ENCODE measurements at regions of chr10 and their contacts with region 1.

Region 1: GRCh38 chr10:24724381-24725228 is 918 bp upstream of the ARHGAP21 start:
- DNase-seq: peak; percentile 90
- ATAC-seq: peak; percentile 87
- H3K4me3 ChIP-seq: peak overlapping the region; percentile 88
- H3K27ac ChIP-seq: peak overlapping the region; percentile 51
- H3K4me1 ChIP-seq: peaks cover 6% of the 10 kb centered on the region; the same call in 1 of the 2 replicates
- H3K27me3 ChIP-seq: no peaks in the 10 kb centered on the region
- CTCF ChIP-seq: no peak
- EP300 ChIP-seq: no peak
- POLR2A ChIP-seq: peak; percentile 89
- RAD21 ChIP-seq: peak; percentile 4; the same call in 1 of the 2 replicates

Region 2: DNA sequence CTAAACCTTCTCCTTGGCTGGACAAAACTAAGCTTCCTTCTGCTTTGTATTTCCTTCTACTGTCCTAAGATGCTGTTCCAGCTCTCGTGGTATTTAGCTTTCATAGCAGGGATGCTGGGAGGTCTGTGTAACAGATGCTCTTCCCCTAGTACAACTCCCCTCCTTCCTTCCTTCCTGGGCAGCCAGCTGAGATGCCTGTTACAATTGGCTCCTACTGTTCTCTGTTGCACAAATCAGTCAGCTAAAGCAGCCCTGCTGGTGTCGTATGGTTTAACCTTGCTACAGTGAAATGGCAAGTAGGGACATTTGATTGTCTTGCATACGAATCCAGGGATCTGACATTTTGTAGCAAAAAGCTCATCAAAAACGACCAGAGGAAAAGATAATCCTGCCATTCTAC is 144.7 kb before region 1 on chr10:
- CTCF ChIA-PET with region 1: no interaction called
- POLR2A ChIA-PET with region 1: no interaction called
- RAD21 ChIA-PET with region 1: no interaction called
- SMC1A ChIA-PET with region 1: no interaction called
- in situ Hi-C with region 1: no loop called
- intact Hi-C with region 1: no loop called
- DNase-seq: no peak
- ATAC-seq: no peak
- H3K4me3 ChIP-seq: no peak overlapping the region
- H3K27ac ChIP-seq: no peak overlapping the region
- H3K4me1 ChIP-seq: no peaks in the 10 kb centered on the region
- H3K27me3 ChIP-seq: no peaks in the 10 kb centered on the region
- CTCF ChIP-seq: no peak
- EP300 ChIP-seq: no peak
- POLR2A ChIP-seq: no peak
- RAD21 ChIP-seq: no peak

Region 3: GRCh38 chr10:24652381-24652957 is 72.1 kb before region 1 on chr10:
- CTCF ChIA-PET with region 1: interaction called, 4 read pairs
- POLR2A ChIA-PET with region 1: interaction called, 28 read pairs
- RAD21 ChIA-PET with region 1: interaction called, 9 read pairs
- SMC1A ChIA-PET with region 1: interaction called, 5 read pairs
- in situ Hi-C with region 1: no loop called
- intact Hi-C with region 1: loop called (anchors 2 kb)
- DNase-seq: peak; percentile 62
- ATAC-seq: peak; percentile 93
- H3K4me3 ChIP-seq: peak overlapping the region; percentile 46
- H3K27ac ChIP-seq: peak overlapping the region; percentile 76
- H3K4me1 ChIP-seq: peaks cover 15% of the 10 kb centered on the region
- H3K27me3 ChIP-seq: no peaks in the 10 kb centered on the region
- CTCF ChIP-seq: no peak
- EP300 ChIP-seq: peak; percentile 42 to 82; a peak in 3 of 4 replicates
- POLR2A ChIP-seq: no peak
- RAD21 ChIP-seq: no peak

Region 4: GRCh38 chr10:24664991-24665390 is 59.6 kb before region 1 on chr10:
- CTCF ChIA-PET with region 1: no interaction called
- POLR2A ChIA-PET with region 1: no interaction called
- RAD21 ChIA-PET with region 1: no interaction called
- SMC1A ChIA-PET with region 1: no interaction called
- in situ Hi-C with region 1: no loop called
- intact Hi-C with region 1: no loop called
- DNase-seq: no peak
- ATAC-seq: no peak
- H3K4me3 ChIP-seq: no peak overlapping the region
- H3K27ac ChIP-seq: no peak overlapping the region
- H3K4me1 ChIP-seq: no peaks in the 10 kb centered on the region
- H3K27me3 ChIP-seq: no peaks in the 10 kb centered on the region
- CTCF ChIP-seq: no peak
- EP300 ChIP-seq: no peak
- POLR2A ChIP-seq: no peak
- RAD21 ChIP-seq: no peak

Region 5: GRCh38 chr10:24882047-24882698 is 157.6 kb after region 1 on chr10:
- CTCF ChIA-PET with region 1: interaction called, 4 read pairs
- POLR2A ChIA-PET with region 1: no interaction called
- RAD21 ChIA-PET with region 1: no interaction called
- SMC1A ChIA-PET with region 1: interaction called, 5 read pairs
- in situ Hi-C with region 1: no loop called
- intact Hi-C with region 1: loop called (anchors 2 kb)
- DNase-seq: peak; percentile 53
- ATAC-seq: peak; percentile 77
- H3K4me3 ChIP-seq: no peak overlapping the region
- H3K27ac ChIP-seq: no peak overlapping the region
- H3K4me1 ChIP-seq: no peaks in the 10 kb centered on the region
- H3K27me3 ChIP-seq: no peaks in the 10 kb centered on the region
- CTCF ChIP-seq: no peak
- EP300 ChIP-seq: no peak
- POLR2A ChIP-seq: no peak
- RAD21 ChIP-seq: no peak

Region 6: GRCh38 chr10:24952707-24953645 is 228.4 kb after region 1 on chr10:
- CTCF ChIA-PET with region 1: interaction called, 8 read pairs
- POLR2A ChIA-PET with region 1: interaction called, 10 read pairs
- RAD21 ChIA-PET with region 1: interaction called, 32 read pairs
- SMC1A ChIA-PET with region 1: interaction called, 51 read pairs
- in situ Hi-C with region 1: no loop called
- intact Hi-C with region 1: loop called (anchors 5 kb)
- DNase-seq: no peak
- ATAC-seq: peak; percentile 72
- H3K4me3 ChIP-seq: peak overlapping the region; percentile 66; the same call in 1 of the 2 replicates
- H3K27ac ChIP-seq: no peak overlapping the region
- H3K4me1 ChIP-seq: peaks cover under 1% of the 10 kb centered on the region; the same call in 1 of the 2 replicates
- H3K27me3 ChIP-seq: no peaks in the 10 kb centered on the region
- CTCF ChIP-seq: peak; percentile 20 to 53 (median 24); a peak in 4 of 6 replicates
- EP300 ChIP-seq: no peak
- POLR2A ChIP-seq: peak; percentile 51
- RAD21 ChIP-seq: peak; percentile 49

Region 7: DNA sequence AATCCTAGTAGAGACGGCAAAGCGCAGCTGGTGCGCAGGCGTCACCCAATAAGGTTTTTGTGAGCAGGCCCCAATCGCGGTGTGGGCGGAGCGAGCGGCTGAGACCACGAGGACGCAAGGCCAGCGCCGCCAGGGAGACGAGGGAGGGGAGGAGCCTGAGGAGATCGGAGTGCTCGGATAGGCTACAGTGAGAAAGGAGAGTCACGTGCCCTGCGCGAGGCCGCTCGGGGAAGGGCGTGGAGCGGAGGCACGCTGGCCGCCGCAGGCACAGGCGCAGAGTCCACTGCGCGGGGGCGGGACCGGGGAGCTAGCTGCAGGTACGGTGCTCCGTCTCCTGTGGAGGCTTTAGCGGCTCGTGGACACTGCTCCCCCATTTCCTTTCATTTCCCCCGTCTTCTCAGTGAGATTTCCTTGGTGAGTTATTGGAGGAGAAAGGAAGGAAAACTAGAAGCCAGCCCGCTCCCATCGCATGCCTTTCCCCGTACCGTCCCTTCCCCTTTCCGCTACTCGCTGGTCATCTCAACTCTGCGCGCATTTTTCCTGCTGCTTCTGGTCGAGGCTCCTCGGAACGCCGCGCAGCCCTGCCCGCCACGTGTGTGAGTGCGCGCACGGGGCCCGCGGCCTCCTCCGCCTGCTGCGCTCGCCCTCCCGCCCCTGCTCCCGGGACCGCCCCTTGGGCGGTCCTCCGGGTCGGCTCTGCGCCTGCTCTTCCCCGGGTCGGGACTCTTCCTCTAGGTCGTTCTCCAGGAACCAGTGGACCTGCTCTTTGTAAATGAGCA is 292.0 kb after region 1 on chr10 and contains the start of gene THNSL1:
- CTCF ChIA-PET with region 1: no interaction called
- POLR2A ChIA-PET with region 1: no interaction called
- RAD21 ChIA-PET with region 1: no interaction called
- SMC1A ChIA-PET with region 1: interaction called, 4 read pairs
- in situ Hi-C with region 1: no loop called
- intact Hi-C with region 1: loop called (anchors 10 kb)
- DNase-seq: peak; percentile 90
- ATAC-seq: peak; percentile 98
- H3K4me3 ChIP-seq: peak within 1 kb of the TSS; percentile 81
- H3K27ac ChIP-seq: peak within 1 kb of the TSS; percentile 80
- H3K4me1 ChIP-seq: peaks cover 4% of the 10 kb centered on the region
- H3K27me3 ChIP-seq: no peaks in the 10 kb centered on the region
- CTCF ChIP-seq: no peak
- EP300 ChIP-seq: no peak
- POLR2A ChIP-seq: peak; percentile 94
- RAD21 ChIP-seq: no peak
- polyA plus RNA-seq, gene THNSL1: 5.8 to 6.1 TPM

Measured in GM12878 (cell line).